Psoas muscle (tissue), 8 donors: ENCODE measurements at regions of chr11 and their contacts with region 1.

Region 1: GRCh38 chr11:46006418-46007070 is 84.1 kb downstream of the LARGE2 start:
- DNase-seq: no peak
- ATAC-seq: peak; percentile 65 to 93 (median 80)
- H3K4me3 ChIP-seq: no peak overlapping the region
- H3K27ac ChIP-seq: no peak overlapping the region
- H3K4me1 ChIP-seq: peaks cover 10% of the 10 kb centered on the region
- H3K27me3 ChIP-seq: no peaks in the 10 kb centered on the region
- CTCF ChIP-seq: peak; percentile 82

Region 2: DNA sequence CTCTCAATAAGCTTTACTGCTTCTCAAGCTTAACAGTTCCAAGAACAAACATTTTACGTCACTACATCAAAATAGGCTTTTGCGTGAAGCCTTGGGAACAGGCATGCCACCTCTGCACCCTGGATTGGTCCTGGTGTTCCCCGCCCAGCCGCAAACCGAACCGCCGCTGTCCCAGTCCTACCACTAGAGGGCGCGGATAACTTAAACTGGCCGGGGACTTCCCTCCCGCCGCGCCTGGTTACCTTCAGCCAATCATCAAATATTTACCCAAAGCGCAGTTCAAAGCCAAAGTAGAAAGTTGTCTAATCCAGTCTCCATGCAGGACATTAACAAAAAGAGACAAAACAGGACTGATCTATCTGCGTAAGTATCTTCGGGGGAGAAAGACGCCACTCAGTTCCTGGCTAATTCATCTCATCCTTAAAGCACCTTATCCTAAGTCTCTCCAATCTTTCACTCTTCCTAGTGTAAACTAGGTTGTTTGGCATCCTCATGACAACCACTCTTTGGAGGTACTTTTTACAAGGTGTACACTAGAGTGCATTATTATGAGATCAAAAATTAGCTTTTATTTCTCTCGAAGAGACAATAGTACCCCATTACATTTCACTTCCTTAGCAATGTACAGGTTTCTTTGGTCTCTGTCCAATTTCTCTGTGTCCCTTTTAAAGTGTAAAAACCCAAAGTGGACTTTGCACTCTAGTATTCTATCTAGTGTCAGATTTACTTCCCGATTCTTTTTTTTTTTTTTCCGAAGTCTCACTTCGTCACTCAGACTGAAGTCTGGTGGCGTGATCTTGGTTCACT is 163.2 kb before region 1 on chr11:
- intact Hi-C with region 1: loop called in 1 of 2 experiments (anchors 2 kb)
- DNase-seq: peak; percentile 89 to 94
- ATAC-seq: peak; percentile 26 to 55 (median 34)
- H3K4me3 ChIP-seq: peak overlapping the region; percentile 29
- H3K27ac ChIP-seq: peak overlapping the region; percentile 36
- H3K4me1 ChIP-seq: peaks cover 8% of the 10 kb centered on the region
- H3K27me3 ChIP-seq: no peaks in the 10 kb centered on the region
- CTCF ChIP-seq: peak; percentile 92

Region 3: GRCh38 chr11:45899448-45900173 is 106.9 kb before region 1 on chr11:
- intact Hi-C with region 1: no loop called
- DNase-seq: peak; percentile 85 to 93
- ATAC-seq: peak; percentile 66 to 90 (median 82)
- H3K4me3 ChIP-seq: peak overlapping the region; percentile 69
- H3K27ac ChIP-seq: no peak overlapping the region
- H3K4me1 ChIP-seq: peaks cover 7% of the 10 kb centered on the region
- H3K27me3 ChIP-seq: peaks cover 0 to 38% (median 13%) of the 10 kb centered on the region in 3 donors
- CTCF ChIP-seq: no peak

Region 4: GRCh38 chr11:45964911-45965389 is 41.6 kb before region 1 on chr11:
- intact Hi-C with region 1: loop called (anchors 2 kb)
- DNase-seq: peak in 1 of 2 donors; percentile 31
- ATAC-seq: peak; percentile 83 to 93 (median 90)
- H3K4me3 ChIP-seq: no peak overlapping the region
- H3K27ac ChIP-seq: no peak overlapping the region
- H3K4me1 ChIP-seq: no peaks in the 10 kb centered on the region
- H3K27me3 ChIP-seq: no peaks in the 10 kb centered on the region
- CTCF ChIP-seq: peak; percentile 83

Region 5: DNA sequence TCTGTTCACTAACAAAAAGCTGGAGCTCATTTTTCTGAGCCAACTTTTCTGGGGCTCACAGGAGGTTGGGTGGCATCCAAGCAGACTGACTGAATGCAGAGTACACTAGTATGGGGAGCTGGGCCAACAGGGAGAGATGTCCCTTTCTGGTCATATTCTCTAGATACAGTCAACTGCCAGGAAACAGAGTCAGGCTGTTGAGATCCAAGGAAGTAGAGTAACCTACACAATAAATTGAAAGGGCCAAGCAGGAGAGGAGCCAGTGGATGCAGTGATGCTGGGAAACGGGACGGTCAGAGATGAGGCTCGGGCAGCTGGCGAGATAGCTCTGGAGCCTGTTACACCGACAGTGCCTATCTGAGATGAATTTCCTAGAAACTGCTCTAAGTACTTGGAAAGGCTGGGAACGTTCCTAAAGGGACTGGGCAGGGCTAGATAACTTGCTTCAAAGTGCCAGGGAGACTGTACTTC is 13.0 kb before region 1 on chr11:
- intact Hi-C with region 1: no loop called
- DNase-seq: peak in 1 of 2 donors; percentile 16
- ATAC-seq: peak in 2 of 4 donors; percentile 24 to 47
- H3K4me3 ChIP-seq: no peak overlapping the region
- H3K27ac ChIP-seq: no peak overlapping the region
- H3K4me1 ChIP-seq: peaks cover 29% of the 10 kb centered on the region
- H3K27me3 ChIP-seq: no peaks in the 10 kb centered on the region
- CTCF ChIP-seq: no peak

Region 6: DNA sequence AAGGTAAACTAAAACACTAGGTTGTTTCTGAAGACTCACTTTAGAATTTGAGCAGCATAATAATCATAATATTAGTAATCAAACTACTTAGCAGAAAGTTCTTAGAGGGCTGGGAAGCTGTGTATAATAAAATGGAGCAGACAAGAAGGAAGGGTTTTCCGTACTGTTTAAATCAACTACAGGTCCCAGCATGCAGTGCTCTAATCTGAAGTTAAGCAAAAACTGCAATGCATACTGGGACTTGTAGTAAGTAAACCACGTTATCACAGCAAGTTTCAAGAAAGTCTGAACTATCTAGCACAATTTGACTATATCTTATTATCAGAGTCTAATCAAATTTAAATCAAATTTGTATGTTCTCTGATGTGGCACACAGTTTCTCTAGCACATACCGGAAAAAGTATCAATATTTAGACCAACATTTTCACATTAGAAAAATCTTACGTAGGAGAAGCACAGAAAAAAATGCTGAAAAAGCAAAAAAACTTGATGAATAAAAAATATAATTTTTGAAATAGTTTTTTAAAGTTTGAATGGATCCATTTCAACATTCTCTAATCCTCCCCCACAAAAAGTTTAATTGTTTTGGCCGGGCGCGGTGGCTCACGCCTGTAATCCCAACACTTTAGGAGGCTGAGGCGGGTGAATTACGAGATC is 106.5 kb after region 1 on chr11:
- intact Hi-C with region 1: no loop called
- DNase-seq: no peak
- ATAC-seq: peak; percentile 74 to 97 (median 94)
- H3K4me3 ChIP-seq: peak overlapping the region; percentile 35
- H3K27ac ChIP-seq: no peak overlapping the region
- H3K4me1 ChIP-seq: peaks cover 56% of the 10 kb centered on the region
- H3K27me3 ChIP-seq: no peaks in the 10 kb centered on the region
- CTCF ChIP-seq: no peak